Posterior vena cava (tissue), 2 donors: ENCODE measurements at regions of chr10 and their contacts with region 1.

Region 1: GRCh38 chr10:126776138-126776537 is 105.6 kb upstream of the C10orf90 start:
- DNase-seq: no peak

Region 2: DNA sequence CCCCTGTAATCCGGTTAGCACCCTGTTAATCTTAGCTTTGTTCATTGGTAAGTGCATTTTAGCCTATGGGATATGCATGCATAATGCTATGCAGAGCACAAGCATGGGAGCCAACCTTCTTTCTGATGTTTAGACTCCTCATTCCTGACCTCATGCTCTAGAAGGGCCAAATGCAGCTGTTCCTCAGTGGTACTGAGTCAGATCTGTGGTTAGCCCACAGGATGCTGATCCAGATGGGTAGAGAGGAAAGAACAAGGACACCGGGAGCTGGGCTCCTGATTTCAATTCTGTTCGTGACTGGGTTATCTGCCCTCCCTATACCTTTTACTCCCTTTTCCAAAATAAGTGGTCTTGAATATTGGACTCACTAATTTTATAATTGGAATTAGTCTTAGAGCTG is 74.0 kb before region 1 on chr10:
- intact Hi-C with region 1: no loop called
- DNase-seq: no peak

Region 3: DNA sequence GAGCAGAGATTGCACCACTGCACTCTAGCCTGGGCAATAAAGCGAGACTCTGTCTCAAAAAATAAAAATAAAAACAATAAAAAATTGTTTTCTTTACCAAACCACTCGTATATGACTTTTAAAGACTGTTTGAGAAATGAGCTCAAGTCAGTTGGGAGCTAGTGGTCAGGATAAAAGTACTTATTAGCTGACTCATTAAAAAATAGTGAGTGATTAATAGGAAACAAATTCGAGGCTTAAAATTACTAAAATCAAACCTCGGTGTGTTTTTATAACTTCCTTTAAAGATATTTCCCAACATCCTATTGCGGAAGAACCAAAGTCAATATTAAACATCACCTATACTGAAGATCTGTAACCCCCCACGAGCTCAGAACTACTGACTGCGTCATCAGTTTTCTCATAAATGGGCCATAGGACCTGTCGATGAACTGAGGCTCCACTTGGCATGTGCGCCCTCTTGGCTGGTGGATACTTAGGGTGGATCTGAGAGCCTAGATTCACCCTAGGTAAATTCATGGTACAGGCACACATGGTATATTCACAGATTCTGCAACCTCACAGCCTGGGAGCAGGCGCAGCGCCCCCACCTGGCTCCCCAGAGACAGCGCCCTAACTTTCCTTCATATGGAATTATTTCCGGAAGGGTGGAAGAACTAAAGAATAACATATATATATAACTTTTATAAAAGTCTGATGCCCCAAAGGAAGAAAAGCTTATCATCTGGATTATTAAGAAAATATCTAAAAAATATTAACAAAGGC is 1340.9 kb after region 1 on chr10:
- intact Hi-C with region 1: loop called in 1 of 2 experiments (anchors 5 kb)
- DNase-seq: no peak